AG04449 (cell line): ENCODE measurements at regions of chr10 and their contacts with region 1.

Region 1: DNA sequence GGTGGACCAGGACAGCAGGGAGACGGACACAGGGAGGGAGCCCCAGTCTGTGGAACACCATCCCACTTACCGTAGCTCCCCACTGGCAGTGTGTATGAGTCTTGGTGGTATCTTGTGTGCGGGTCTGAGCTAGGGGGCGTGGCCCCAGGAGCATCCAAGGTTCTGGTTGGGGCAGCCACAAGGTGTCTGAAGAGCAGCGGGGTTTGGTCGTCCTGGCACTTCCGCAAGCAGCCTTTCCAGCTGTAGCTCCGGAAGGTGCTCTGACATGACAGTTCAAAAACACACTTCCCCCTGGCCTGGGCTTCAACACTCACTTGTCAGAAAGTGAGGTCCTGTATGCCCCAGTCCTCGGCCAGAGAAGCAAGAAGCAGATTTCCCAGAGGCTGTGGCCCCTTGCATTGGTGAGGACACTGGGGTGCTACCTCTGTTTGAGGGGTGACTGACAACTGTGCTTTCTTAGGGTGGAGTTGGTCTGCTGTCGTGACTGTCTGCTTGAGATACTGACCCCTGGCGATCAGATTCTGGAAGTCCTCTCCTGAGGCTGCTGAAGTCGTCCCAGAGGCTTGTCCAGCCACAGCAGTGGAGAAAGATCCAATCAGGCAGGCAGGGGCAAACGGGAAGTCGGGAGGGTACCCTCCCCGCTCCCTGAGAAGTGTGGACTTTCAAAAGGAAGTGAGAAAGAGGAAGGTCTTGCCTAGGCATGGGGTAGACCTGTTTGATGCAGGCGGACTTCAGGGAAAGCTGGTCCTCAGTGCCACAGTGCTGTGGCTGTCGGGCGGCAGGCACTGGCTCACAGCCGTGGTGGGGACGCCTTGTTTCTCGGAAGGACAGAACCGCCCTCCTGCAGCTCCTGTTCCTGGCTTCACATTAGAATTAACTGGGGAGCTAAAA is 51.4 kb upstream of the PFKFB3 start:
- DNase-seq: no peak
- H3K4me3 ChIP-seq: no peak overlapping the region
- CTCF ChIP-seq: peak; percentile 72

Region 2: DNA sequence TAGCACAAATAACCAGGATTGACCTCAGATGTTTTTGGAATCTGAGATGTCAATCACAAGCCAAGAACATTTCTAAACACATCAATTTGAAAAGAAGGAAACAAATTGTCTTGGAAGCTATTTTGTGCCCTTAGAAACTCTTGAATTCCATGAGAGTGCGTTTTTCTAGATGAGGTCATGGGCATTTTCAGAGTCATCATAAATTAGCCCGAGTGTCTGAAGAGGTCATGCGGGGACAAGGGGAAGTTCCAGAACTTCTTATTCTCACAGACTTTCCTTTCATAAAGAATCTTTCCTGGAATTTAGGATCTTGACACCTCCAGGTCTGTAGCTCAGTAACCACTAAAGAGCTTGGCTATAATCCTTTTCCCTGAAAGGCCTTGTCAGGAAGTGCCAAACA is 117.4 kb before region 1 on chr10:
- CTCF ChIA-PET with region 1: no interaction called
- POLR2A ChIA-PET with region 1: no interaction called
- DNase-seq: no peak
- H3K4me3 ChIP-seq: no peak overlapping the region
- CTCF ChIP-seq: no peak

Region 3: DNA sequence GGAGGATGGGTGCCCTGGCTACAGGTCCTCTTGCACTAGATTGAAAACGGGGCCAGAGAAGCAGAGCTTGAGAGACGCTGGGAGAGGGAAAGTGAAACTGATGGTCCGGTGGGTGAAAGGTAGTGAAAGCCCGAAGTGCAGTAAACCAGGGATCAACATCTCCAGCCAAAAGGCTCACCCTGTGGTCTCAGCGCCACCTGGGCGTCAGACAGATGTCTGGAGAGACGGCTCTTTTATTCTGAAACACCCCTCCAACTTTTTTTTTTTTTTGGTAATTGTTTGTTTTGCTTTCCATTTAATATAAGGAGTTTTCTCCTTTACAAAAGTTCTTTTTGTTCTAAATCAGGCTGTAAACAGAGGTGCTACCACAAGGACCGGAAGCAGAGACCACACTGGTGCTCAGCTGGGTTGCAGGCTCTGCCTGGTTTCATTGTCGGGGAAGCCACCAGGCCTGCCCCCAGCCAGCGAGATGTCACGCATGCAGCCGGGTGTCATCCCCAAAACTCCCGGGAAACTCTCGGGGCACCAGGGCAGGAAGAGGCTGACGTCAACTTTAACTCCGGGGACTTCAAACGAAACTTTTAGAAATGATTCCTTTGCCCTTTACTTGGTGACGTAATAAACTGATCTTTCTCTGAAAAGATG is 100.4 kb before region 1 on chr10:
- CTCF ChIA-PET with region 1: no interaction called
- POLR2A ChIA-PET with region 1: no interaction called
- DNase-seq: no peak
- H3K4me3 ChIP-seq: peak overlapping the region; percentile 41
- CTCF ChIP-seq: no peak

Region 4: GRCh38 chr10:6108603-6109443 is 42.5 kb before region 1 on chr10:
- CTCF ChIA-PET with region 1: interaction called, 24 read pairs
- POLR2A ChIA-PET with region 1: no interaction called
- DNase-seq: no peak
- H3K4me3 ChIP-seq: no peak overlapping the region
- CTCF ChIP-seq: peak; percentile 30

Region 5: GRCh38 chr10:6136215-6137201 is 14.8 kb before region 1 on chr10:
- CTCF ChIA-PET with region 1: interaction called, 16 read pairs
- POLR2A ChIA-PET with region 1: no interaction called
- DNase-seq: no peak
- H3K4me3 ChIP-seq: peak overlapping the region; percentile 23
- CTCF ChIP-seq: no peak

Region 6: GRCh38 chr10:6721480-6721879 is 570.1 kb after region 1 on chr10:
- CTCF ChIA-PET with region 1: no interaction called
- POLR2A ChIA-PET with region 1: no interaction called
- DNase-seq: peak; percentile 90
- H3K4me3 ChIP-seq: peak overlapping the region; percentile 29; the same call in 1 of the 2 replicates
- CTCF ChIP-seq: peak; percentile 59